GM12878 (cell line): ENCODE measurements at regions of chr11 and their contacts with region 1.

Region 1: GRCh38 chr11:62880803-62881578 is at the start of gene SLC3A2:
- DNase-seq: peak; percentile 47
- ATAC-seq: peak; percentile 92
- H3K4me3 ChIP-seq: peak within 1 kb of the TSS; percentile 91
- H3K27ac ChIP-seq: peak within 1 kb of the TSS; percentile 95
- H3K4me1 ChIP-seq: peaks cover 15% of the 10 kb centered on the region
- H3K27me3 ChIP-seq: no peaks in the 10 kb centered on the region
- CTCF ChIP-seq: peak; percentile 64 to 86 (median 83)
- EP300 ChIP-seq: peak in 1 of 2 experiments; percentile 17; a peak in 1 of 4 replicates
- POLR2A ChIP-seq: peak; percentile 94
- RAD21 ChIP-seq: peak; percentile 58
- polyA plus RNA-seq, gene SLC3A2: 6.9 to 17.0 TPM

Region 2: GRCh38 chr11:62497132-62497915 is 383.7 kb before region 1 on chr11:
- CTCF ChIA-PET with region 1: no interaction called
- POLR2A ChIA-PET with region 1: no interaction called
- RAD21 ChIA-PET with region 1: no interaction called
- SMC1A ChIA-PET with region 1: no interaction called
- in situ Hi-C with region 1: no loop called
- intact Hi-C with region 1: no loop called
- DNase-seq: peak; percentile 13
- ATAC-seq: peak; percentile 75
- H3K4me3 ChIP-seq: no peak overlapping the region
- H3K27ac ChIP-seq: no peak overlapping the region
- H3K4me1 ChIP-seq: no peaks in the 10 kb centered on the region
- H3K27me3 ChIP-seq: peaks cover 0 to 2% of the 10 kb centered on the region in 2 experiments; a peak in 1 of 4 replicates
- CTCF ChIP-seq: peak; percentile 31 to 53 (median 37); a peak in 4 of 6 replicates
- EP300 ChIP-seq: no peak
- POLR2A ChIP-seq: no peak
- RAD21 ChIP-seq: peak; percentile 57

Region 3: DNA sequence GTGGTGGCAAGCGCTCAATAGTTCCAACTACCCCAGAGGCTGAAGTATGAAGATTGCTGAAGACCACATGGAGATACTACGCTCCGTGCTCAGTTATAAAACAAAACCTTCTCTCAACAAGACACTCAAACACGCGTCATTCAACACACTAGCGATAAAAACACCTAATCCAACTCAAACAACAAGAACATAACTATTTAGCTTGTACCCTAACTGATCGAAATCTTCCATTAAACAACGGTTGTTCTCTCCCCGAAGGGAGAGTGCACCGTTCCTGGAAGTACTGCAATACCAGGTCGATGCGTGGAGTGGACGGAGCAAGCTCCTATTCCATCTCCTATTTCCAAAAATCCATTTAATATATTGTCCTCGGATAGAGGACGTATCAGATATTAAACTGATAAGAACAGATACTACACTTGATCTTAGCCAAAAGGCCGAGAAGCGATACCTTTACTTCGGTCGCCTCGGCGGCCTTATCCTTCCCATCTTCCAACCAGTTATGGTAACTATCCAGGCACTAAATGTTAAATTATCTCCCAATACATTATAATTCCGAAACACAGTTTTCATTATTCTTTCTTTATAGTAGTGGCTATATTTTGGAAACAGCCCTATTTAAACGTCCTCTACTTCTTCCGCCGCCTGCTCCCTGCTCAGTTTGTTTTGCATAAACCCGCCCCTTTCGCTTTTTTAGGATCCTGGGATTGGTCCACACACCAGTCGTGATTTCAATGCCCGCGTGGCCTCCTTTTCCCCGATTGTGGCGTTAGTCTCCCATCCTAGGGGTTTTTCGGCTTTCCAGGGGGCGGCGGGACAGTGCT is 39.4 kb before region 1 on chr11:
- CTCF ChIA-PET with region 1: interaction called, 3 read pairs
- POLR2A ChIA-PET with region 1: interaction called, 8 read pairs
- RAD21 ChIA-PET with region 1: interaction called, 4 read pairs
- SMC1A ChIA-PET with region 1: no interaction called
- in situ Hi-C with region 1: no loop called
- intact Hi-C with region 1: loop called (anchors 2 kb)
- DNase-seq: peak; percentile 100
- ATAC-seq: peak; percentile 83
- H3K4me3 ChIP-seq: peak overlapping the region; percentile 68; the same call in 1 of the 2 replicates
- H3K27ac ChIP-seq: peak overlapping the region; percentile 99
- H3K4me1 ChIP-seq: peaks cover 7% of the 10 kb centered on the region
- H3K27me3 ChIP-seq: no peaks in the 10 kb centered on the region
- CTCF ChIP-seq: peak in 1 of 3 experiments; percentile 21; a peak in 1 of 6 replicates
- EP300 ChIP-seq: peak in 1 of 2 experiments; percentile 72; a peak in 1 of 4 replicates
- POLR2A ChIP-seq: peak; percentile 92
- RAD21 ChIP-seq: no peak

Region 4: DNA sequence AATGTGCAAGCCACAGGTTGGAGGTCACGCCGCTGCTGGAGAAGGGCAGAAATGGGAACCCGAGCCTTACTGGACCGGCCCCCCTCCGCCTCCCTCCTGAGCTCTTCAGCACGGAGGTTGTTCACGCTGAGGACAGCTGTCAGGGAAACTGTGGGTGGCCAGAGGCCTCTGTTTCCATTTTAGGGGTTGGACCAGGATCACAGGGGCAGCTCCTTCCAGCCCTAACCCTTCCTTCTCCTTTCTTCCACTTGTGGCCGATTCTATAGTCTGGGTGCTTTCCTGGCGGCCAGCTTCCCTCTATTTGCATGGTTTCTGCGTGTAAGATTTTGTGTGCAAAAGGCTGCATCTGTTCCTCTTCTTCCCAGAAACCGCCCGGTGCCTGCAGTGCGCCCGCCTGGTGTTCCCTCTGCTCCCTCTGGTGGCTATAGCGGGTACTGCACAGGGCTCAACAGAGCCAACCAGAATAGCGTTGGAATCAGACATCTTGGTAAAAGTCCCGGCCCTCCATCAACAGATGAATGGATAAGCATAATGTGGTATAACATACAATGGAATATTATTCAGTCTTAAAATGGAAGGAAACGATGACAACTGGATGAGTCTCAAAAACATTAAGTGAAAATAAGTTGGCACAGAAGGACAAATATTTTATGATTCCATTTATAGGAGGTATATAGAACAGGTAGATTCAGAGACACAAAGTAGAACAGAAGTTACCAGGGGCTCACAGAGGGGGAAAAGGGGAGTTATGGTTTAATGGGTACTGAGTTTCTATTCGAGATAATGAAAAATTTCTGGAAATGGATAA is 143.1 kb after region 1 on chr11:
- CTCF ChIA-PET with region 1: interaction called, 11 read pairs
- POLR2A ChIA-PET with region 1: no interaction called
- RAD21 ChIA-PET with region 1: no interaction called
- SMC1A ChIA-PET with region 1: no interaction called
- in situ Hi-C with region 1: no loop called
- intact Hi-C with region 1: no loop called
- DNase-seq: no peak
- ATAC-seq: peak; percentile 97
- H3K4me3 ChIP-seq: no peak overlapping the region
- H3K27ac ChIP-seq: no peak overlapping the region
- H3K4me1 ChIP-seq: peaks cover 3% of the 10 kb centered on the region; the same call in 1 of the 2 replicates
- H3K27me3 ChIP-seq: no peaks in the 10 kb centered on the region
- CTCF ChIP-seq: peak; percentile 98 to 100 (median 99)
- EP300 ChIP-seq: no peak
- POLR2A ChIP-seq: no peak
- RAD21 ChIP-seq: peak; percentile 90